ENCODE measurements at regions of chr16 and their contacts with region 1.

Region 1: GRCh38 chr16:50210266-50211038 is 55.9 kb upstream of the ADCY7 start:
- DNase-seq: peak; percentile 36 to 76 (median 59)
- ATAC-seq: peak; percentile 86 to 95 (median 94)
- H3K4me3 ChIP-seq: no peak overlapping the region
- H3K4me3 Mint-ChIP-seq: no peak overlapping the region
- H3K27ac ChIP-seq: no peak overlapping the region
- H3K27ac Mint-ChIP-seq: peak overlapping the region; percentile 72 to 77
- H3K4me1 ChIP-seq: peaks cover 0 to 4% of the 10 kb centered on the region in 2 experiments
- H3K4me1 Mint-ChIP-seq: peaks cover 33 to 41% (median 36%) of the 10 kb centered on the region in 3 donors
- H3K27me3 ChIP-seq: no peaks in the 10 kb centered on the region
- H3K27me3 Mint-ChIP-seq: no peaks in the 10 kb centered on the region

Region 2: DNA sequence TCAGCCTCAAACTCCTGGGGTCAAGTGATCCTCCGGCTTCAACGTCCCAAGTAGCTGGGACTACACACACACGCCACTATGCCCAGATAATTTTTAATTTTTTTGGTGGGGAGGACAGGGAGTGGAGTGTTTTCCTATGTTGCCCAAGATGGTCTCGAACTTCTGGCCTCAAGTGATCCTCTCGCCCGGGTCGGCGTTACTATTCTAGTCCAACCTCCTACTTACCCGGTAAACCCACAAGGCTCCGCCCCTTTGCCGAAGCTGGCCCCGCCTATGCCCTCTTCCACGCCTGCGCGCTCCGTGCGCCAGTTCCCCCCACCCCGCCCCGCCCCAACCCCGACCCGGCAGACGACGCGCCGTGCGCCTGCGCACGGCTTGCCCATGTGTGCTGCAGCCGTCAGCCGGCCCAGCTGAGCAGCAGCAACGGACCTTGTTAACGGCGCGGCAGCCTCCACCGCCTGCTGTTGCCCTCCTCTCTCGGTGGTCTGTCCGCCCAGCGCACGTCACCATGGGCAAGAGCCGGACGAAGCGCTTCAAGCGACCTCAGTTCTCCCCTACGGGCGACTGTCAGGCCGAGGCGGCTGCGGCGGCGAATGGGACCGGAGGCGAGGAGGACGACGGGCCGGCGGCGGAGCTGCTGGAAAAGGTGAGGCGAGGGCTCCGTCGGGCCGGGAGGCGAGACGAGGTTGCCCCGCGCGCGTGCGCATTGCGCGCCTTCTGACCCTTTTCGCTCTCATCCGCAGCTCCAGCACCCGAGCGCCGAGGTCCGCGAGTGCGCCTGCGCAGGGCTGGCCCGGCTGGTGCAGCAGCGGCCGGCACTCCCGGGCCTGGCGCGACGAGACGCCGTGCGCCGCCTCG is 144.6 kb before region 1 on chr16 and contains the start of gene HEATR3:
- CTCF ChIA-PET with region 1: interaction called, 18 to 54 read pairs
- POLR2A ChIA-PET with region 1: interaction called in 1 of 2 experiments, 3 read pairs
- DNase-seq: peak; percentile 80 to 98 (median 91)
- ATAC-seq: peak; percentile 84 to 87 (median 86)
- H3K4me3 ChIP-seq: peak within 1 kb of the TSS; percentile 80 to 84
- H3K4me3 Mint-ChIP-seq: peak within 1 kb of the TSS; percentile 86 to 93 (median 87)
- H3K27ac ChIP-seq: peak within 1 kb of the TSS; percentile 56
- H3K27ac Mint-ChIP-seq: peak within 1 kb of the TSS; percentile 88 to 92
- H3K4me1 ChIP-seq: peaks cover 13 to 24% of the 10 kb centered on the region in 2 experiments
- H3K4me1 Mint-ChIP-seq: peaks cover 39 to 44% (median 41%) of the 10 kb centered on the region in 3 donors
- H3K27me3 ChIP-seq: no peaks in the 10 kb centered on the region
- H3K27me3 Mint-ChIP-seq: no peaks in the 10 kb centered on the region
- total RNA-seq, gene HEATR3: 17.0 to 28.4 (median 24.6) TPM

Region 3: DNA sequence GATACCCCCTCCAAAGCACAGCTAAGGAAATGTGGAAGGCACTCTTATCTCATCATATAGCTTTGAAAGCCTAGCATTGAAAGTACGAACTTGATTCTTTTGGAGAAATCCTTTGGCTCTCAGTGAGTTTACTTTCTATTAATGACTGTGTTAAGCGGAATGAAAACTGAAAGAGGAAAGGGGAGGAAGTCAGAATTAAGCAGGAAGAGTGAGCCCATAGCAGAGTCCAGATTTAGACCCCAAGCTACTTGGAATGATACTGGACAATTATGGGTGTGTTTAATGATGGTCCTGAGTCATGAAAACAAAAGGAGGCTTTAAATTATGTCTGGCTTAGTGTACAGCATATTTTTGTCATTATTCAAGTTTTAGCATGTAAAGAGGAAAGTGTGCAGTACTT is 15.2 kb before region 1 on chr16:
- CTCF ChIA-PET with region 1: interaction called, 5 to 27 read pairs
- POLR2A ChIA-PET with region 1: interaction called in 1 of 2 experiments, 5 read pairs
- DNase-seq: no peak
- ATAC-seq: no peak
- H3K4me3 ChIP-seq: no peak overlapping the region
- H3K4me3 Mint-ChIP-seq: peak overlapping the region in 1 of 3 donors; percentile 28
- H3K27ac ChIP-seq: peak overlapping the region; percentile 23
- H3K27ac Mint-ChIP-seq: peak overlapping the region; percentile 56 to 74
- H3K4me1 ChIP-seq: peaks cover 8 to 17% of the 10 kb centered on the region in 2 experiments
- H3K4me1 Mint-ChIP-seq: peaks cover 69 to 76% (median 74%) of the 10 kb centered on the region in 3 donors
- H3K27me3 ChIP-seq: no peaks in the 10 kb centered on the region
- H3K27me3 Mint-ChIP-seq: no peaks in the 10 kb centered on the region

Region 4: DNA sequence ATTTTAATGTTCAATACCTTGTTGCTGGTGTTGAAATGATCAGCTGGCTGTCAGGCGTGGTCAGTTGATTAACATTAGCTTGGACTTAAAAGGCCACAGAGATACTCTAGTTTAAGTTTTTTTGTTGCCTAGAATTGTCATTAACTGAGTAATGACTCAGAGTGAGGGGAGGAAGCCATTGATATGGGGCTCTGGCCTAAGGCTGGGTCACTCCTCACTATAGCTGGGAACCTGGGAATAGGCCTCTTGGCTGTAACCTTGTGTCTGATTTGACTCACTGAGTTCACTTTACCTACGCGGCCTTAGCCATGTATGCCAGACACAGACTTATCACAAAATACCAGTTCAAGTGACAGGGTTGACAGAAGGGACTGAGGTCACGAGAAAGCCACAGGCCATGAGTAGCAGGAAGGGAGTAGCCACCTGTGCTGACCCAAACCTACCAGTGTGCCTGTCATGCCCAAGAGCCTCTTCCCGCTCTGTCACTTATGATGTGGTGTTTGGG is 18.0 kb after region 1 on chr16:
- CTCF ChIA-PET with region 1: no interaction called
- POLR2A ChIA-PET with region 1: no interaction called
- DNase-seq: no peak
- ATAC-seq: no peak
- H3K4me3 ChIP-seq: no peak overlapping the region
- H3K4me3 Mint-ChIP-seq: no peak overlapping the region
- H3K27ac ChIP-seq: no peak overlapping the region
- H3K27ac Mint-ChIP-seq: no peak overlapping the region
- H3K4me1 ChIP-seq: no peaks in the 10 kb centered on the region
- H3K4me1 Mint-ChIP-seq: no peaks in the 10 kb centered on the region
- H3K27me3 ChIP-seq: no peaks in the 10 kb centered on the region
- H3K27me3 Mint-ChIP-seq: no peaks in the 10 kb centered on the region

Region 5: GRCh38 chr16:50244504-50245416 is 34.3 kb after region 1 on chr16:
- CTCF ChIA-PET with region 1: no interaction called
- POLR2A ChIA-PET with region 1: no interaction called
- DNase-seq: no peak
- ATAC-seq: peak in 2 of 4 experiments; percentile 3 to 5
- H3K4me3 ChIP-seq: peak overlapping the region in 1 of 2 donors; percentile 72
- H3K4me3 Mint-ChIP-seq: peak overlapping the region; percentile 66 to 79 (median 76)
- H3K27ac ChIP-seq: no peak overlapping the region
- H3K27ac Mint-ChIP-seq: peak overlapping the region in 1 of 2 donors; percentile 39
- H3K4me1 ChIP-seq: peaks cover 3 to 22% of the 10 kb centered on the region in 2 experiments
- H3K4me1 Mint-ChIP-seq: peaks cover 7 to 14% (median 9%) of the 10 kb centered on the region in 3 donors
- H3K27me3 ChIP-seq: peaks cover 0 to 25% of the 10 kb centered on the region in 2 experiments
- H3K27me3 Mint-ChIP-seq: no peaks in the 10 kb centered on the region

Region 6: DNA sequence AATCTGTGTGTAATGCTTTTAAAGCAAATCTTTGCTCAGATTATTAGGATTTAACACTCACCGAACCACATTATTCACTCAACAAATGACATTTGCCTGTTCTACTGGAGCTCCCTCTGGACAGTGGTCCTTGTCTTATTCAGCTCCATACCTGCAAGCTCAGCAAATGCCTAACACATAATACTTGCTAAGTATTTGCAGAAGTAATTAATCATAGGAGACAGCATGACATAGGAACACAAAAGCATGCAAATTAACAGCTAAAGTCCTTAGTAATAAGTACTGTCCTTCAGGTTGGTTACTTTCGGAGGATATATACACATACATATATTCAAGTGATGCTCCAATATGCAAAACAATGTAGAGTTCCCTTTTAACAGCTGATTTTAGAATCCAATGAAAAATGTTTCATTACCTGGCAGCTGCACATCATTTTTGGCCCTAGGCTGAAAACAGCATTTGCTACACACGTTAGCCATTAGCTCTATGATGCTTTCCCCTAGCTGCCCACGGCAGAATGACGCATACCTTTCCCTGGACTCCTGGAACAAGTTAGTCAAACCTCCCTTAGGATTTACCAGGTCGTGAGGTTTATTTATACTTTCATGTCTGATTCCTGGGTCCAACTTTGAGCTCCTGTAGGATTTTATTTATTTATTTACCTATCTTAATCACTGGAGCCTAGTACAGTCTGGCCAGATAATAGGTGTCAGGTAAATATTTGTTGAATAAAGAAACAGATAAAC is 149.8 kb after region 1 on chr16:
- CTCF ChIA-PET with region 1: interaction called, 3 to 18 read pairs
- POLR2A ChIA-PET with region 1: no interaction called
- DNase-seq: no peak
- ATAC-seq: no peak
- H3K4me3 ChIP-seq: no peak overlapping the region
- H3K4me3 Mint-ChIP-seq: no peak overlapping the region
- H3K27ac ChIP-seq: peak overlapping the region; percentile 13
- H3K27ac Mint-ChIP-seq: peak overlapping the region; percentile 32 to 45
- H3K4me1 ChIP-seq: peaks cover 0 to 6% of the 10 kb centered on the region in 2 experiments
- H3K4me1 Mint-ChIP-seq: peaks cover 59 to 75% (median 60%) of the 10 kb centered on the region in 3 donors
- H3K27me3 ChIP-seq: no peaks in the 10 kb centered on the region
- H3K27me3 Mint-ChIP-seq: no peaks in the 10 kb centered on the region

Measured in T-cell (primary cell).